CD14-positive monocyte (primary cell): ENCODE measurements at regions of chr6 and their contacts with region 1.

Region 1: DNA sequence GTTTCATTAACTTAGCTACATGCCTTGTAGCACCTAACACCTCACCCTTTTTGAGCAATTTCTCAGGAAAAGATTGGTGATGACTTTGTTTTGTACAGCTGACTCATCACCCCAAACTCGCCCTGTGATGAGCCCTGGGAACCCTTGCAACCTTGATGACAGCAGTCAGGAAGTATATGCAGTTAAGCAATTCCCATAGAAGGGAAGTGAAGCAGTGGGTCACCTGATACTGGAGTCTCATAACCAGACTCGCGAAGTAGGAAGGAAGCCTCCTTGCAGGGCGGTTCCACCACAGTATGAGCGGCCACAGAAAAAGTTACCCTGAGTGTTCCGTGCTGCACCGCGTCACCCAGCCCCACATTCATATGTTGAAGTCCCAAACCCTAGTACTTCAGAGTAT is 82.0 kb upstream of the EDN1 start:
- DNase-seq: peak; percentile 95 to 100 (median 99)
- H3K4me3 ChIP-seq: no peak overlapping the region
- H3K4me3 Mint-ChIP-seq: peak overlapping the region in 1 of 2 donors; percentile 81
- H3K27ac ChIP-seq: peak overlapping the region; percentile 49 to 79
- H3K27ac Mint-ChIP-seq: peak overlapping the region; percentile 92 to 98 (median 94)
- H3K4me1 ChIP-seq: peaks cover 13 to 14% of the 10 kb centered on the region in 2 donors
- H3K4me1 Mint-ChIP-seq: peaks cover 16% of the 10 kb centered on the region
- H3K27me3 ChIP-seq: peaks cover 0 to 2% of the 10 kb centered on the region in 2 donors
- H3K27me3 Mint-ChIP-seq: peaks cover 4 to 8% (median 8%) of the 10 kb centered on the region in 3 donors
- CTCF ChIP-seq: no peak

Region 2: GRCh38 chr6:12051861-12052368 is 156.3 kb before region 1 on chr6:
- intact Hi-C with region 1: loop called in 1 of 2 experiments (anchors 10 kb)
- DNase-seq: peak; percentile 83 to 97 (median 84)
- H3K4me3 ChIP-seq: peak overlapping the region in 1 of 3 experiments; percentile 38
- H3K4me3 Mint-ChIP-seq: peak overlapping the region in 1 of 2 donors; percentile 55
- H3K27ac ChIP-seq: peak overlapping the region in 1 of 2 donors; percentile 80
- H3K27ac Mint-ChIP-seq: peak overlapping the region; percentile 89 to 97 (median 93)
- H3K4me1 ChIP-seq: peaks cover 56 to 61% of the 10 kb centered on the region in 2 donors
- H3K4me1 Mint-ChIP-seq: peaks cover 59% of the 10 kb centered on the region
- H3K27me3 ChIP-seq: no peaks in the 10 kb centered on the region
- H3K27me3 Mint-ChIP-seq: no peaks in the 10 kb centered on the region
- CTCF ChIP-seq: no peak

Region 3: GRCh38 chr6:12354499-12354898 is 146.3 kb after region 1 on chr6:
- intact Hi-C with region 1: loop called in 1 of 2 experiments (anchors 10 kb)
- DNase-seq: no peak
- H3K4me3 ChIP-seq: no peak overlapping the region
- H3K4me3 Mint-ChIP-seq: no peak overlapping the region
- H3K27ac ChIP-seq: no peak overlapping the region
- H3K27ac Mint-ChIP-seq: no peak overlapping the region
- H3K4me1 ChIP-seq: peaks cover 25% of the 10 kb centered on the region in 2 donors
- H3K4me1 Mint-ChIP-seq: peaks cover 12% of the 10 kb centered on the region
- H3K27me3 ChIP-seq: peaks cover 2 to 4% of the 10 kb centered on the region in 2 donors
- H3K27me3 Mint-ChIP-seq: peaks cover 0 to 5% (median 3%) of the 10 kb centered on the region in 3 donors
- CTCF ChIP-seq: no peak